CD8-positive, alpha-beta T cell (primary cell): ENCODE measurements at regions of chr1 and their contacts with region 1.

Region 1: DNA sequence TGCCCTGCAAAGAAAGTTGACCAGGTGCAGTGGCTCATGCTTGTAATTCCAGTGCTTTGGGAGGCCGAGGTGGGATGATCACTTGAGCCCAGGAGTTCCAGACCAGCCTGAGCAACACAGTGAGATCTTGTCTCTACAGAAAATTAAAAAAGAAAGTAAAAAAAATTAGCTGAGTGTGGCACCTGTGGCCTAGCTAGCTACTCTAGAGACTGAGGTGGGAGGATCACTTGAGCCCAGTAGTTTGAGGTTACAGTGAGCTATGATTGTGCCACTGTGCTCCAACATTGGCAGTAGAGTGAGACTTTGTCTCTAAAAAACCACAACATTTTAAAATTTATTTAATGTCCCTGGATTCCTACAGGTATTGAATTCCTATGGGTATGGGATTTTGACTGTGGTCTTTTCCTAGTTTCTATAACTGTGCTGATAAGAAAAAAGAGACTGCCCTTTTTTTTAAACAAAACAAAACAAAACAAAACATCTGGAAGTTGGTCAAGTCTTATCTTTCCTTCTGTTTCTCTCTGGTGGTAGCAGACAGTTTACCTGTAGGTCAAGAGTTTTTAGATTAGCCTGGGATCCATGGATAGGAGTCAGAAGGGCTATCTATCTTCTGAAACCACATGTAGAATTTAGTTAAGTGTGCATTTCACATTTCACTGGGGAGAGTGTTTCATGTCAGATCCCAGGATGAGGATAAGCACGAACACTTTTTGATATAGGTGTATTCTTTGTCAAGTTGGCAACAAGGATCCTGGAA is 18.8 kb downstream of the UCK2 start:
- DNase-seq: no peak
- ATAC-seq: no peak
- H3K4me3 ChIP-seq: no peak overlapping the region
- H3K4me3 Mint-ChIP-seq: no peak overlapping the region
- H3K27ac ChIP-seq: no peak overlapping the region
- H3K27ac Mint-ChIP-seq: no peak overlapping the region
- H3K4me1 ChIP-seq: peaks cover 15% of the 10 kb centered on the region
- H3K4me1 Mint-ChIP-seq: peaks cover 21% of the 10 kb centered on the region
- H3K27me3 ChIP-seq: no peaks in the 10 kb centered on the region
- H3K27me3 Mint-ChIP-seq: no peaks in the 10 kb centered on the region
- CTCF ChIP-seq: no peak

Region 2: GRCh38 chr1:165833358-165833757 is 12.8 kb before region 1 on chr1:
- CTCF ChIA-PET with region 1: interaction called, 3 read pairs
- POLR2A ChIA-PET with region 1: no interaction called
- intact Hi-C with region 1: loop called in 1 of 2 experiments (anchors 1 kb)
- DNase-seq: no peak
- ATAC-seq: no peak
- H3K4me3 ChIP-seq: no peak overlapping the region
- H3K4me3 Mint-ChIP-seq: no peak overlapping the region
- H3K27ac ChIP-seq: no peak overlapping the region
- H3K27ac Mint-ChIP-seq: no peak overlapping the region
- H3K4me1 ChIP-seq: peaks cover 6% of the 10 kb centered on the region
- H3K4me1 Mint-ChIP-seq: peaks cover 16% of the 10 kb centered on the region
- H3K27me3 ChIP-seq: no peaks in the 10 kb centered on the region
- H3K27me3 Mint-ChIP-seq: no peaks in the 10 kb centered on the region
- CTCF ChIP-seq: no peak

Region 3: GRCh38 chr1:165857046-165857801 is 11.1 kb after region 1 on chr1:
- CTCF ChIA-PET with region 1: interaction called, 10 read pairs
- POLR2A ChIA-PET with region 1: no interaction called
- intact Hi-C with region 1: no loop called
- DNase-seq: peak in 1 of 9 experiments; percentile 14
- ATAC-seq: no peak
- H3K4me3 ChIP-seq: no peak overlapping the region
- H3K4me3 Mint-ChIP-seq: no peak overlapping the region
- H3K27ac ChIP-seq: no peak overlapping the region
- H3K27ac Mint-ChIP-seq: no peak overlapping the region
- H3K4me1 ChIP-seq: no peaks in the 10 kb centered on the region
- H3K4me1 Mint-ChIP-seq: peaks cover 7% of the 10 kb centered on the region
- H3K27me3 ChIP-seq: no peaks in the 10 kb centered on the region
- H3K27me3 Mint-ChIP-seq: no peaks in the 10 kb centered on the region
- CTCF ChIP-seq: no peak